Left lung (tissue), 14 donors: ENCODE measurements at regions of chr1 and their contacts with region 1.

Region 1: DNA sequence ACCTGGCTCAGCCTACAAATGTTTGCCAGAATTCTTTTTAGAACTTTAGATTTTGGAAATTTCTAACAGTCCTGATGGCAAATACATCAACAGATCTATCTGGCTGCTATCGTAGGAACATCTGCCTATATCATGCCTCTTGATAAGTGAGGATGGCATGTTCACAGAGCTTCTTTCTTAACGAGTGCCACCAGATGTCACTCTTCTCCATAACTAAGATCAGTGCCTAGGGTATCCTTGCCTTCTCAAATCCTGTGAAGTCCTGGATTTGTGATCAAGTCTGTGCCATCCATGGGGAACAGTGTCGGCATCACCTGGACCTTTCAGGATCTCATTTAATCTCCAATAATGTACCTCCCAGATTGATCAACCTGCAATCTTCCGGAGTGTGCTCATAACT is 36.5 kb upstream of the CD5L start:
- DNase-seq: peak in 2 of 4 donors; percentile 1 to 25
- ATAC-seq: no peak
- H3K4me3 ChIP-seq: no peak overlapping the region
- H3K27ac ChIP-seq: no peak overlapping the region
- H3K4me1 ChIP-seq: no peaks in the 10 kb centered on the region
- H3K27me3 ChIP-seq: no peaks in the 10 kb centered on the region
- CTCF ChIP-seq: no peak

Region 2: DNA sequence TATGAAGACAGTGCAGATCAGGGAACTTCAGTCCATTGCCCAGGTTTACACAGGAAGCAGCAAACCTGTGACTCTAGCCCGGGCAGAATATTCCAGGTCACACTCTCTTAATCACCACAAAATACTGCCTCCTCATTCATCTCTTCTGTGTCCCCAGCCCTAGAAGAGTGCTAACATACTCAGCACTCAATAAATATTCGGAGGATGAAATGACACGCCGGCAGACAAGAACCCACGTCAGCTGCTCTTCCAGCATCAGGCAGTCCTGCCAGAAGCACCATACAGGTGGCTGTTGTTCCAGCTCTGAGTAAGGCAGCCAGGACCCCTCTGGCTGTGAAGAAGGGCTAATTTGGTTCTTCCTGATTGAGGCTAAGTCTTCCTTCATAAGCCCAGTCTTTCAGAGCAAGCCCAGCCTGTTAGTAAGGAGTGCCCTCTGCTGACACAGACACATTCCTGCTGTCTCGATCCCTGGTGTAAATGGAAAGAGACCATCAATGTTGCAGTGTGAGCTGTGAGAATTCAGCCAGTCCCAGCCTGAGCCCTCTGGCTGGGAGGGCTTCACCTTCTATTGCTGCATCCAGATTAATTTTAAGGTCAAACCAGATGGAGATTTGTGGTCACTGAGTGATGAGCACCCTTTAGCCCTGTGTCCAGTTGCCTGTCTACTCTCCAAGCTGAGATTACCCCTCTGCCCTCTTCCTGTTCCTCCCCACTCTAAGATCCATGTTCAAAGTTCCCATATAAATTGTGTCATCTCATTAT is 70.4 kb after region 1 on chr1:
- intact Hi-C with region 1: loop called in 1 of 2 experiments (anchors 10 kb)
- DNase-seq: peak in 2 of 4 donors; percentile 33 to 48
- ATAC-seq: peak; percentile 86
- H3K4me3 ChIP-seq: no peak overlapping the region
- H3K27ac ChIP-seq: no peak overlapping the region
- H3K4me1 ChIP-seq: peaks cover 0 to 7% of the 10 kb centered on the region in 2 donors
- H3K27me3 ChIP-seq: peaks cover 0 to 8% of the 10 kb centered on the region in 2 donors
- CTCF ChIP-seq: peak in 1 of 2 donors; percentile 43